ENCODE measurements at regions of chr20 and their contacts with region 1.

Region 1: GRCh38 chr20:51128198-51128597 is 105.3 kb upstream of the KCNG1 start:
- DNase-seq: peak; percentile 60
- H3K4me3 Mint-ChIP-seq: no peak overlapping the region
- H3K27ac Mint-ChIP-seq: peak overlapping the region; percentile 36
- H3K4me1 Mint-ChIP-seq: peaks cover 21% of the 10 kb centered on the region
- H3K27me3 Mint-ChIP-seq: peaks cover 12% of the 10 kb centered on the region

Region 2: DNA sequence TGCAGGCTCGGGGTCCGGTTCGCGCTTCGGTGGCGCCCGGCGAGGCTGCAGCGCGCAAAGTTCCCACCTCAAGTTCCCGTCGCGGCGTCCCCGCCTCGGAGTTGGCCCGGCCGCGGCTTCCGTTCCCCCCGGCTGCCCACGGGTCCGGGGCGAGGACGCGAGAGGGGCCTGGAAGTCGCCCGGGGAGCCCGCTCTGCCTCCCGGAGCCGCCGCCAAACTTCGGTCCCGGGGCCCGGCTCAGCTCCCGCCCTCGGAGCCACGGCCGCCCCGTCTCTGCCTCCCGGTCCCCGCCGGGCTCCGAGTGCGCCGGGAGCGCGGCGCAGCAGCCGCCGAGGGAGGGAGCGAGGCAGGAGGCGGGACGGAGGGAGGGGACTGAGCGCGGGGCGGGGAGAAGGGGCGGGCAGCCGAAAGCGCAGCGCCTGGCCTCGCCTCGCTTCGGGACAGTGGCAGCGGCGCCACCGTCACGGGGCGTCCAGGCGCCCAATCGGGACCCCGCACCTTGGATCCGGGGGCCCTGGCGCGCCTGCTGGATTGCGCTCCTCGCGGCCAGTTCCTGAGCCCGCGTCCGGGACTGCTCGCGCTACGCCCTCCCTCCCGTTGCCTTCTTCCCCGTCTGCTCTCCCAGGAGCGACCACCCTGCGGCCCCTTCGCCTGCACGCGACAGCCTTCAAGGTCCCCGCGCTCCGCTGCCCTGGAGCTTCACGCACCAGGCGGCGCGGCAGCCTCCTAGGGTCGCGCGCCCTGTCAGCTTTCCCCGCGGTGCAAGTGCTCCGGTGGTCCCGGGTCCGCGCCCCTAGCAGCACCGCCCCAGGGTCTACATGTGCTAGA is 105.2 kb before region 1 on chr20 and contains the start of gene KCNG1:
- CTCF ChIA-PET with region 1: no interaction called
- POLR2A ChIA-PET with region 1: no interaction called
- intact Hi-C with region 1: loop called (anchors 5 kb)
- DNase-seq: peak; percentile 77
- H3K4me3 Mint-ChIP-seq: peak within 1 kb of the TSS; percentile 45
- H3K27ac Mint-ChIP-seq: no peak within 1 kb of the TSS
- H3K4me1 Mint-ChIP-seq: peaks cover 4% of the 10 kb centered on the region
- H3K27me3 Mint-ChIP-seq: peaks cover 58% of the 10 kb centered on the region
- total RNA-seq, gene KCNG1: 1.6 to 2.1 TPM

Region 3: GRCh38 chr20:51059862-51060261 is 68.3 kb before region 1 on chr20:
- CTCF ChIA-PET with region 1: interaction called, 4 read pairs
- POLR2A ChIA-PET with region 1: no interaction called
- intact Hi-C with region 1: loop called (anchors 1 kb)
- DNase-seq: peak; percentile 17
- H3K4me3 Mint-ChIP-seq: no peak overlapping the region
- H3K27ac Mint-ChIP-seq: no peak overlapping the region
- H3K4me1 Mint-ChIP-seq: peaks cover 48% of the 10 kb centered on the region
- H3K27me3 Mint-ChIP-seq: peaks cover 27% of the 10 kb centered on the region

Region 4: GRCh38 chr20:51562332-51563155 is 434.3 kb after region 1 on chr20:
- CTCF ChIA-PET with region 1: no interaction called
- POLR2A ChIA-PET with region 1: no interaction called
- intact Hi-C with region 1: no loop called
- DNase-seq: peak; percentile 19
- H3K4me3 Mint-ChIP-seq: peak overlapping the region; percentile 49
- H3K27ac Mint-ChIP-seq: no peak overlapping the region
- H3K4me1 Mint-ChIP-seq: peaks cover 20% of the 10 kb centered on the region
- H3K27me3 Mint-ChIP-seq: peaks cover 41% of the 10 kb centered on the region

Measured in activated CD4-positive, alpha-beta memory T cell treated with anti-CD3 and anti-CD28 coated beads for 36 hours (primary cell).